Astrocyte of the cerebellum (primary cell): ENCODE measurements at regions of chr7 and their contacts with region 1.

Region 1: GRCh38 chr7:26131056-26131589 is 20.9 kb upstream of the NFE2L3 start:
- DNase-seq: no peak
- H3K4me3 ChIP-seq: no peak overlapping the region
- CTCF ChIP-seq: no peak

Region 2: GRCh38 chr7:26170663-26171062 is 39.5 kb after region 1 on chr7:
- in situ Hi-C with region 1: loop called (anchors 5 kb)
- DNase-seq: no peak
- H3K4me3 ChIP-seq: no peak overlapping the region
- CTCF ChIP-seq: no peak